ENCODE measurements at regions of chr7 and their contacts with region 1.

Region 1: DNA sequence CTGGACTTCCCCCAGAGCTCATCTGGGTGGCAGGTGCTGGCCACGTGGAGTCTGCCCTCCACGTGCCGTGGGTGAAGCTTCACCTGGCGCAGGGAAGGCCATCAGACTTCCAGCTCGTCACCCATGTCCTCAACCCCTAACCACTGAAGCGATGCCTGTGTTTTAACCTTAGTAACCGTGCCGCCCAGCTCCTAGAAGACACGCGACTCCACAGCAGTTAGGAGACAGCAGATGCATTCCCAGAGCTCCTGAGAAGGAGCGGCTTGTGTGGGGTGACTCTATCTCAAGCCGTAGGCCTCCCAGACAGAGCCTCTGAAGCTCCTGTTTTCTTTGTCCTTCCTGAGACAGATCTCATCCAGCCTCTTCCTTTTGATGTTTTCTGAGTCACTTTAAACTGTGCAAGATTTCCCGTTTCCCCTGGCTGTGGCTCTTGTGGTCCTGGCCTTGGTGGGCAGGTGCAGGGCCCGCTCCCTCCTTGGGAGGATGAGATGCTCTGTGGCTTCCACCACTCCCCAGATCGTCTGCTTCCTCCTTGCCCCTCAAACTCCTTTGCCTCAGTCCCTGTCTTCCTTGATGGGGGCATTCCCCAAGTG is 41.4 kb upstream of the AP5Z1 start:
- DNase-seq: no peak
- H3K4me3 ChIP-seq: no peak overlapping the region
- CTCF ChIP-seq: no peak

Region 2: DNA sequence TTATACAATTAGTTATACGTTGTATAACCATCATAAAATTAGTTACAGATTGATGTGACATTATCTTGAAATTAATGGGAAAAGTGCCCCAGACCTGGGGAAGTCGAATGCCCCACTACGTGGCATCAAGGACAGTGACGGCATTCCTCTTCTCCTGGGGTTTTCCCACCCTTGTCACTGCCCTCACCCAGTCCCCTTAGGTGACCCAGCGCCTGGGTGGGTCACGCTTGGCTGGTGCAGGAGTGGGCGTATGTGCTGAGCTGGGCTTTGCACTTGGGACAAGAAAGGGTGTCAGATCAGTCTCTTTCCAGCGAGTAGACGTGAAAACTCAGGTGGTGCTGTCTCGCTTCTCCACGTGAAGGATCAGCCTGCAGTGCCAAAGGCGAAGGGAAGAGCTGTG is 44.4 kb before region 1 on chr7:
- in situ Hi-C with region 1: loop called (anchors 5 kb)
- DNase-seq: no peak
- H3K4me3 ChIP-seq: no peak overlapping the region
- CTCF ChIP-seq: no peak

Region 3: GRCh38 chr7:4775250-4775847 is 41.3 kb after region 1 on chr7 and contains the start of gene AP5Z1:
- in situ Hi-C with region 1: no loop called
- DNase-seq: peak; percentile 89
- H3K4me3 ChIP-seq: peak within 1 kb of the TSS; percentile 98
- CTCF ChIP-seq: no peak

Region 4: DNA sequence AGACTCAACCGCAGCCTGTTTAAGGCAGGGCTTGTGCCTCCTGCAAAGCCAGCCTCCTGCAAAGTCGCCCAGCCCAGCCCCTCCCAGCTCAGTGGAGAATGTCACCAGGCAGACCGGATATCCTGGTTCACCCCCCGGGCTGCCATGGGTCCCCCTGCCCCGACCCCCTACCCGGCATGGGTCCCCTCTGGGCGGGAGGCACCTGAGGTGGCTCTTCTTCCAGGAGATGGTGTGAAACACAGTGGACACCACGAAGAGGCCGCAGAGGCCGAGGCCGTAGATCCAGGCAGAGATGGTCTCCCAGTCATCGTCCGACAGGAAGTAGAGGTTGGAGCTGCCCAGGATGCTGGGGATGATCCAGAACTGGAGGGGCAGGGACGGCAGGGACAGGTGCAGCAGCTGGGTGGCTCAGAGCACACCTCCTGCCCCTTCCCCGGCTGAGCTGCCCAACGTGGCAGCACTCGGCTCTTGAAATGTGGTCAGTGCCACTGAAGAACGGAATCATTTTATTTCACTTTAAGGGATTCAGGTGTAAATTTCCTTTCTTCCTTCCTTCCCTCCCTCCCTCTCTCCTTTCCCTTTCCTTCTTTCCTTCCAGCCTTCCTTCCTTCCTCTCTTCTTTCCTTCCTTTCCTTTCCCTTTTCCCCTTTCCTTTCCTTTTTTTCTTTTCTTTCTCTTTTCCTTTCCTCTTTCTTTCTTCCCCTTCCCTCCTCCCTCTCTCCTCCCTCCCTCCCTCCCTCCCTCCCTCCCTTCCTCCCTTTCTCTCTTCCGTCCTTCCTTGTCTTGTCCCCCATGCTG is 186.1 kb after region 1 on chr7:
- in situ Hi-C with region 1: no loop called
- DNase-seq: no peak
- H3K4me3 ChIP-seq: no peak overlapping the region
- CTCF ChIP-seq: no peak